ENCODE measurements at regions of chr15 and their contacts with region 1.

Region 1: DNA sequence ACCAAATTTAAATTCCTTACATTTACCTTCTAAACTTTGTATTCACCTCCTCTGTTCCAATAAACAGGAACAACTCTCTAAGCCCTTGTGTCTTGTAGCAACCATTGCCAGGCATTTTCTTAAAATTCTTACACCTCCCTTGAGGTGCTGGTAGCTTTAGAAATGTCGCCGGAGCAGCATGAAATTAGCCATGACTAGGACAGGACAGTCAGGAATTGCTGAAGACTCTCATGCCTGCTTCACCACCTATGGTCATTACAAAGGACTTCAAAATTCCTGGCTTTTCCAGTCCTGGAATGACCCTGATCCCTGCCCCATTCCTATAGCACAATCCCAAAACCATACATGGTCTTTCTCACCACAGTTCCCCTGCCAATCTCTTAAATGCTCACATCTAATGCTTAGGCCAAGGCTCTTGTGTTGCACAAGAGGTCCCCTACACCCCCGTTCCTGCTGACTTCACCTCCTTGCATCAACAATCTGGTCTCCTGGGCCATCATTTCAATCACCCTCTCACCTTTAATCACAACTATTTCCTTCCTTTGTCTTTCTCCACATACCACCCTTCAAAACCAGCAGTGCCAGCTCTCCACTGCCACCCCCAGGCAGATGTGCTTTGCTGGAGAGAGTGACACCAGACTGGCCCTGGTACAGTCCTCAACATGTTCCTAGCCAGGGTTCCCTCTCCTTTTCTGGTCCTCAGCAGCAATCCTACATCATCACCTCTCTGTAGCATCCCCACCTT is 113.2 kb upstream of the TJP1 start:
- DNase-seq: no peak
- ATAC-seq: peak; percentile 21 to 55

Region 2: DNA sequence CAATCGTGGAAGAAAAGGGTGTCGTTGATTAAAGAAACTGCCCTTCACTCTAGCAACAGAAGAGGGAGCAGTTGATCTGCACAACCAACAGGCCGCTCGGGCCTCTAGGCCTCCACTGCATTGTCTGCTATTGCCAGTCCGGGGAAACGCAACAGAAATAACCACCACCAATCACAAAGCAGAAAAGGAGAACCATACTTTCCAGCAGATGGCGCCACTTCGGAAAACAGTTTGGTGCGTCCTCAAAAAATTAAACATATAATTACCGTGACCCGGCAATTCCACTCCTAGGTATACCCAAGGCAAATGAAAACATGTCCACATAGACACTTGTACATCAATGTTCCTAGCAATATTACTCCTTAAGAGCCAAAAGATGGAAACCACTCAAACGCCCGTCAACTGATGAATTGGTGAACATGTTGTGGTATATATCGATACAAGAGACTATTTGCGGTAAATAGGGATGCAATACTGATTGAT is 267.3 kb before region 1 on chr15:
- intact Hi-C with region 1: loop called in 1 of 2 experiments (anchors 5 kb)
- DNase-seq: peak; percentile 72
- ATAC-seq: peak; percentile 73 to 90

Region 3: GRCh38 chr15:29674661-29675533 is 260.6 kb before region 1 on chr15:
- intact Hi-C with region 1: loop called in 1 of 2 experiments (anchors 5 kb)
- DNase-seq: peak; percentile 60
- ATAC-seq: peak; percentile 80 to 83

Region 4: GRCh38 chr15:29747837-29748417 is 187.5 kb before region 1 on chr15:
- intact Hi-C with region 1: loop called in 1 of 2 experiments (anchors 10 kb)
- DNase-seq: no peak
- ATAC-seq: no peak

Region 5: GRCh38 chr15:29835301-29835700 is 100.1 kb before region 1 on chr15:
- intact Hi-C with region 1: no loop called
- DNase-seq: peak; percentile 57
- ATAC-seq: peak; percentile 68 to 83